Prostate gland (tissue), 2 donors: ENCODE measurements at regions of chr12 and their contacts with region 1.

Region 1: DNA sequence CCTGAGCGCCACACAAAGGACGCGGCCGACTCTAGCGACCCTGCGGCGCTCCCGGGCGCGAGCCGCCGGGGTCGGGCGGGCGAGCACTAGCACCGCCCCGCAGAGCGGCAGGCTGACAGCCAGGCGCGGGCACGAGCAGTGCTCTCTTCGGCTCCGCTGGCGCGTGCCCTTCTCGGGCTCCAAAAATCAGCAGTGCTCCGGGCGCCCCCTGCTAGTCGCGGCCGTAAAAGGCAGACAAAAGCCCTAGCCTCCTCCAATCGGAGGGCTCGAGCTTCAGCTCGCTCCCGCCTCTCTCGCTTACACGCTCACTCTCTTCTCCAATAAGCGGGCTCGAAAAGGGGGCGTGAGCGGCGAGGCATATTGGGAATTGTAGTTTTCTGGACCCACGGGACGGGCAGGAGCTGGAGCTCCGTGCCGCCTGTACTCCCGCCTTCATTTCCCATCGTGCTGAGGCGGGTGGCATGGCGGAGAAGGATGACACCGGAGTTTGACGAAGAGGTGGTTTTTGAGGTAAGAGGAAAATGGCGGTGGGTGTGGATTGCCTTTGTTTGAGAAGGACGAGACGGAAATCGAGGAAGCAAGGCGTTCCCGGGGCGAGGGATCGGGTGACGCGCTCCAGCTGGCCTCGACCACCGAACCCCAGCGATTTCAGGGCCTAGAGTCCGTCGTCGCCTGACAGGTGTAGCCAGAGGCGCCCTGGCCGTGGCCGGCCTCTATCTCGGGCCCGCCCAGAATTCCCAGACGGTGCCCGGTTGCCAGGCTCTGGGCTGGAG is at the starts of genes FGD6 and VEZT:
- DNase-seq: peak; percentile 99
- H3K4me3 ChIP-seq: peak within 1 kb of the TSS; percentile 73 to 82
- H3K27ac ChIP-seq: peak within 1 kb of the TSS; percentile 93 to 99
- H3K4me1 ChIP-seq: no peaks in the 10 kb centered on the region
- H3K27me3 ChIP-seq: no peaks in the 10 kb centered on the region
- CTCF ChIP-seq: peak in 3 of 4 experiments; percentile 34 to 86 (median 82)
- POLR2A ChIP-seq: peak; percentile 77
- total RNA-seq, gene FGD6: 9.9 to 13.9 TPM
- total RNA-seq, gene VEZT: 37.4 to 81.6 TPM

Region 2: GRCh38 chr12:95072900-95073697 is 144.5 kb before region 1 on chr12 and contains the start of gene NR2C1:
- intact Hi-C with region 1: loop called (anchors 5 kb)
- DNase-seq: peak; percentile 87
- H3K4me3 ChIP-seq: peak within 1 kb of the TSS; percentile 73 to 91
- H3K27ac ChIP-seq: peak within 1 kb of the TSS; percentile 62 to 86
- H3K4me1 ChIP-seq: no peaks in the 10 kb centered on the region
- H3K27me3 ChIP-seq: no peaks in the 10 kb centered on the region
- CTCF ChIP-seq: peak in 2 of 4 experiments; percentile 33 to 90
- POLR2A ChIP-seq: peak; percentile 33
- total RNA-seq, gene NR2C1: 18.7 to 54.0 TPM

Region 3: DNA sequence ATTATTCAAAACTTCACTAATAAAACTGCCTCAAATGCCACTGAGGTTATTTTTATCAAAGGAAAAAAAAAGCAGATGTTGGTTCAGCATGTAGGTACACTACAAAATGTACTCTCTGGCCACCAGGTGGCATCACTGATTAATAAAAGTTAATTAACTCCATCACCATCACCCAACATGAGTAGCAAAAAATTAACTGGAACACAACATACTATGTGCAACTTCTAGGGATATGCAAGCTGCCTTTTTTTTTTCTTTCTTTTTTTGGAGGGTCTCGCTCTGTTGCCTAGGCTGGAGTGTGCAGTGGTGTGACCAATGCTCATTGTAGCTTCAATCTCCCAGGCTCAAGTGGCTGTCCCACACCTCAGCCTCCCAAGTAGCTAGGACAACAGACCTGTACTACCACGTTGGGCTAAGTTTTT is 100.4 kb before region 1 on chr12:
- intact Hi-C with region 1: loop called (anchors 2 kb)
- DNase-seq: peak; percentile 78
- H3K4me3 ChIP-seq: no peak overlapping the region
- H3K27ac ChIP-seq: peak overlapping the region; percentile 30 to 36
- H3K4me1 ChIP-seq: peaks cover 3% of the 10 kb centered on the region
- H3K27me3 ChIP-seq: no peaks in the 10 kb centered on the region
- CTCF ChIP-seq: peak; percentile 47 to 93 (median 88)
- POLR2A ChIP-seq: no peak

Region 4: GRCh38 chr12:95164656-95165055 is 52.9 kb before region 1 on chr12:
- intact Hi-C with region 1: no loop called
- DNase-seq: no peak
- H3K4me3 ChIP-seq: no peak overlapping the region
- H3K27ac ChIP-seq: peak overlapping the region in 1 of 2 donors; percentile 29
- H3K4me1 ChIP-seq: peaks cover 6% of the 10 kb centered on the region
- H3K27me3 ChIP-seq: no peaks in the 10 kb centered on the region
- CTCF ChIP-seq: no peak
- POLR2A ChIP-seq: no peak

Region 5: GRCh38 chr12:95336390-95337067 is 119.0 kb after region 1 on chr12:
- intact Hi-C with region 1: loop called (anchors 5 kb)
- DNase-seq: peak; percentile 84
- H3K4me3 ChIP-seq: no peak overlapping the region
- H3K27ac ChIP-seq: peak overlapping the region; percentile 36 to 57
- H3K4me1 ChIP-seq: no peaks in the 10 kb centered on the region
- H3K27me3 ChIP-seq: no peaks in the 10 kb centered on the region
- CTCF ChIP-seq: peak; percentile 84 to 97 (median 87)
- POLR2A ChIP-seq: no peak

Region 6: DNA sequence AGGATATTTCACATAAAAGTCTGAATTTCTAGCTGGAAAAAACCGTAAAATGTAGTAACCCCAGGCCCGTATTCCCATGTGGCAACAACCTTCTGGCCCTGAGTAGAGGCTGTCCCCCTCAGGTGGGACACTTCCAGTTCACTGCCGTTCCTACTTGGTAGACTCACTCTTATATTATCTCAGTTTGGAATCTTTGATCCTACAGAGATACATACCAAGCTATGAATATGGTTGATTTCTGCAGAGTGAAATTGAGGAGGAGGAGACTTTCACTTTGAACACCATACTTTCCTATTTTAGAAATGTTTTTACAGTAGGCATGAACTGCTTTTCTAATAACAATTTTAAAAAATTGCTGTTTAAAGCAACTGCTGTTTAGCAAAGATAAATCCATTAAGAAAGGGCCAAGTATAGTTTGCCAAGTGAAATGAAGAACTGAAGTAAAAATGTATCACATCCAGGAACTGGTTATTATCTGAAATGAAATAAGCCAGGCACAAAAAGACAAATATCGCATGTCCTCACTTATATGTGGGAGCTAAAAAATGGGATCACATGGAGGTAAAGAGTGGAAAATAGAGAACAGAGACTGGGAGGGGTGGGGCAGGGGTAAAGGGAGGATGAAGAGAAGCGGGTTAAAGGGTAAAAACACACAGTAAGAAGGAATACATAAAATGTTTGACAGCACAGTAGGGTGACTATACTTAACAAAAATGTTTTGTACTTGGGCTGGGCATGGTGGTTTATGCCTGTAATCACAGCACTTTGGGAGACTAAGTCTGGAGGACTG is 163.6 kb after region 1 on chr12:
- intact Hi-C with region 1: loop called (anchors 5 kb)
- DNase-seq: no peak
- H3K4me3 ChIP-seq: no peak overlapping the region
- H3K27ac ChIP-seq: no peak overlapping the region
- H3K4me1 ChIP-seq: no peaks in the 10 kb centered on the region
- H3K27me3 ChIP-seq: no peaks in the 10 kb centered on the region
- CTCF ChIP-seq: no peak
- POLR2A ChIP-seq: no peak

Region 7: GRCh38 chr12:95473884-95474659 is 256.5 kb after region 1 on chr12 and contains the start of gene METAP2:
- intact Hi-C with region 1: loop called (anchors 5 kb)
- DNase-seq: peak; percentile 97
- H3K4me3 ChIP-seq: peak within 1 kb of the TSS; percentile 83 to 95
- H3K27ac ChIP-seq: peak within 1 kb of the TSS; percentile 86 to 92
- H3K4me1 ChIP-seq: no peaks in the 10 kb centered on the region
- H3K27me3 ChIP-seq: no peaks in the 10 kb centered on the region
- CTCF ChIP-seq: peak in 1 of 4 experiments; percentile 7
- POLR2A ChIP-seq: peak; percentile 77
- total RNA-seq, gene METAP2: 46.4 to 61.7 TPM

Region 8: DNA sequence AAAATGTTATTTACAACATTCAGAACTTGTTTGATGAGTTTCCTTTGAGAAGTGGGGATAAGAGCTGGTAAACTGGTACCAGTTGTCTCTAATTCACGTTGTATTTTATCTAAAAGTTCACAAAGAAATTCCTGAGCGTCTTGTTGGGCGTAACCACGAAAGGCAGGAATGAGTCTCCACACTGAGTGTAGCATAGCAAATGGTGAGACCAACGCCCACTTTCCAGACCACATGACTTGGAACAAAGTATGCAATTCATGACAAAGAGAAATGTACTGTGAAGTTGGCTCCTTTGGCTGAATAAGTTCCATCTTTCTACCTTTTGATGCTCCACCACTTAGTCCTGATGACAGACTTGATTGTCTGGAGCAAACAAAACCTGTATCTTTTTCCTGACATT is 315.3 kb after region 1 on chr12:
- intact Hi-C with region 1: loop called (anchors 5 kb)
- DNase-seq: no peak
- H3K4me3 ChIP-seq: no peak overlapping the region
- H3K27ac ChIP-seq: no peak overlapping the region
- H3K4me1 ChIP-seq: no peaks in the 10 kb centered on the region
- H3K27me3 ChIP-seq: no peaks in the 10 kb centered on the region
- CTCF ChIP-seq: no peak
- POLR2A ChIP-seq: no peak